HAP-1 (cell line): ENCODE measurements at regions of chr12 and their contacts with region 1.

Region 1: GRCh38 chr12:10033783-10034545 is 3.5 kb downstream of the CLEC9A start:
- DNase-seq: peak in 1 of 2 experiments; percentile 24
- H3K4me3 ChIP-seq: no peak overlapping the region
- H3K4me1 ChIP-seq: peaks cover 2% of the 10 kb centered on the region; the same call in 1 of the 2 replicates
- H3K27me3 ChIP-seq: no peaks in the 10 kb centered on the region

Region 2: DNA sequence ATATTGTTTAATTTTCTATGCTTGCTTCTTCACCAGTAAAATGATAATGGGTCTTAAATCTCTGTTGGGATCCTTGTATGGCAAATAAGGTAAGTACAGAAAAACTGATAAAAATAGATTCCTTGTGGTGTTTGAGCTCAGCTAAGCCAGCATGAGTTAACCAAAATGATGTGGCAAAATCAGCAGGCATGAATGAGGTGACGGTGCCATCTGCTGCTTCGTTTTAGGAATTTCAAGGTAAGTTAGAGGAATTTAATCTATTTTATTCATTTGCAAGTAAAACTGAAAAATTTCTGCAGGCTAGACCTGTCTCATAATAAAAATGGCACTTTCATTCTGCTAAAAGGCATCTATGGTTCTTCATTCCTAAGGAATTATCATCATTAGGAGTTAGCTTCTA is 106.0 kb after region 1 on chr12:
- in situ Hi-C with region 1: loop called (anchors 5 kb)
- DNase-seq: peak; percentile 64 to 72
- H3K4me3 ChIP-seq: no peak overlapping the region
- H3K4me1 ChIP-seq: peaks cover 7% of the 10 kb centered on the region
- H3K27me3 ChIP-seq: no peaks in the 10 kb centered on the region